ENCODE measurements at regions of chr12 and their contacts with region 1.

Region 1: GRCh38 chr12:56158029-56158925 is at the start of gene MYL6:
- DNase-seq: peak; percentile 94
- H3K4me3 Mint-ChIP-seq: peak within 1 kb of the TSS; percentile 91
- H3K27ac Mint-ChIP-seq: peak within 1 kb of the TSS; percentile 90
- H3K4me1 Mint-ChIP-seq: peaks cover 59% of the 10 kb centered on the region
- H3K27me3 Mint-ChIP-seq: no peaks in the 10 kb centered on the region
- total RNA-seq, gene MYL6: 1,594 to 1,602 TPM

Region 2: GRCh38 chr12:56127888-56128669 is 30.2 kb before region 1 on chr12 and contains the start of gene ESYT1:
- CTCF ChIA-PET with region 1: interaction called, 86 read pairs
- POLR2A ChIA-PET with region 1: interaction called, 178 read pairs
- DNase-seq: peak; percentile 99
- H3K4me3 Mint-ChIP-seq: peak within 1 kb of the TSS; percentile 97
- H3K27ac Mint-ChIP-seq: peak within 1 kb of the TSS; percentile 94
- H3K4me1 Mint-ChIP-seq: peaks cover 75% of the 10 kb centered on the region
- H3K27me3 Mint-ChIP-seq: no peaks in the 10 kb centered on the region
- total RNA-seq, gene ESYT1: 266 to 279 TPM

Region 3: DNA sequence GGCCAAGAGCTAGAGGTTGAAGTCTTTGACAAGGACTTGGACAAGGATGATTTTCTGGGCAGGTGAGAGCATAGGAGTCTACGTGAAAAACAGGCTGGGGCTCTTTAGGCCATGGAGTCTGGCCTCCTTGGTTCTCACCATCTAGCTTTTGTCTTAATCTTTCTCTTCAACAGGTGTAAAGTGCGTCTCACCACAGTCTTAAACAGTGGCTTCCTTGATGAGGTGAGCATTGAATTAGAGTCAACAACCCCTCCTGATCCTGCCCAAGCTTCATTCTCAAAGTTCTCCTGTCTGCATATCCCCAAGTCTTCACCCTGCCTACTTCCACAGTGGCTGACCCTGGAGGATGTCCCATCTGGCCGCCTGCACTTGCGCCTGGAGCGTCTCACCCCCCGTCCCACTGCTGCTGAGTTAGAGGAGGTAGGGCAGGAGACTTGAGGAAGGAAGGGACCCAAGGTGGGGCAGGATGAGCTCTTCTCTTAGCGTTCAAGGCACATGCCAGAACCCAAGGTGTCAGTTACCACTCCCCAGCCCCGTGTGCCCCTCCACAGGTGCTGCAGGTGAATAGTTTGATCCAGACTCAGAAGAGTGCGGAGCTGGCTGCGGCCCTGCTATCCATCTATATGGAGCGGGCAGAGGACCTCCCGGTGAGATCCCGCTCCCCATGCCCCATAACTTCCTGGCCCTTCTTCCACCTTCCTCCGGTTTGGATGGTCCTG is 20.3 kb before region 1 on chr12:
- CTCF ChIA-PET with region 1: interaction called, 3 read pairs
- POLR2A ChIA-PET with region 1: interaction called, 178 read pairs
- DNase-seq: no peak
- H3K4me3 Mint-ChIP-seq: no peak overlapping the region
- H3K27ac Mint-ChIP-seq: peak overlapping the region; percentile 78
- H3K4me1 Mint-ChIP-seq: peaks cover 73% of the 10 kb centered on the region
- H3K27me3 Mint-ChIP-seq: no peaks in the 10 kb centered on the region

Region 4: GRCh38 chr12:56143870-56144269 is 14.4 kb before region 1 on chr12:
- CTCF ChIA-PET with region 1: no interaction called
- POLR2A ChIA-PET with region 1: interaction called, 66 read pairs
- DNase-seq: no peak
- H3K4me3 Mint-ChIP-seq: no peak overlapping the region
- H3K27ac Mint-ChIP-seq: peak overlapping the region; percentile 70
- H3K4me1 Mint-ChIP-seq: peaks cover 47% of the 10 kb centered on the region
- H3K27me3 Mint-ChIP-seq: no peaks in the 10 kb centered on the region

Region 5: GRCh38 chr12:56172831-56173230 is 14.6 kb after region 1 on chr12:
- CTCF ChIA-PET with region 1: interaction called, 3 read pairs
- POLR2A ChIA-PET with region 1: interaction called, 31 read pairs
- DNase-seq: no peak
- H3K4me3 Mint-ChIP-seq: no peak overlapping the region
- H3K27ac Mint-ChIP-seq: peak overlapping the region; percentile 26
- H3K4me1 Mint-ChIP-seq: peaks cover 7% of the 10 kb centered on the region
- H3K27me3 Mint-ChIP-seq: no peaks in the 10 kb centered on the region

Region 6: DNA sequence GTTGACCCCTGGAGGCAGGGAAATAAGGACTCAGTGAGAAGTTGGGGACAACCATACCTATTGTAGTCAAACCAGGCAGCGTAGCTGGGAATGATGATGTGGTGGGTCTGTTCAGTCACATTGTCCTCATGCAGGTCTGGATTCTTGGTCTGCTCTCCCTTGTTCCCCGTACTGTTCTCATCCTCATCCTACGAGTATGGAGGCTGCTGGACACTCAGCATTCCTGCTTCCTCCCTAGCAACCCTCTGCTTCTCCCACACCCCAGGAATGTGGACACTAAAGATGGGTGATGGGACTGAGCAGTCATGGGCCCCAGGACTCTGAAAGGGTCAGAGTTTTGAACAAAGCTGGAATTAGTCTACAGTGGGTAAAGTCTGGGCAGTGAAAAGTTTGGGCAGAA is 20.1 kb after region 1 on chr12:
- CTCF ChIA-PET with region 1: interaction called, 4 read pairs
- POLR2A ChIA-PET with region 1: interaction called, 31 read pairs
- DNase-seq: no peak
- H3K4me3 Mint-ChIP-seq: no peak overlapping the region
- H3K27ac Mint-ChIP-seq: no peak overlapping the region
- H3K4me1 Mint-ChIP-seq: peaks cover 1% of the 10 kb centered on the region
- H3K27me3 Mint-ChIP-seq: no peaks in the 10 kb centered on the region

Region 7: GRCh38 chr12:56565510-56566101 is 407.3 kb after region 1 on chr12:
- CTCF ChIA-PET with region 1: no interaction called
- POLR2A ChIA-PET with region 1: no interaction called
- DNase-seq: peak; percentile 45
- H3K4me3 Mint-ChIP-seq: peak overlapping the region; percentile 31
- H3K27ac Mint-ChIP-seq: peak overlapping the region; percentile 61
- H3K4me1 Mint-ChIP-seq: peaks cover 24% of the 10 kb centered on the region
- H3K27me3 Mint-ChIP-seq: no peaks in the 10 kb centered on the region